ENCODE measurements at regions of chr6 and their contacts with region 1.

Region 1: GRCh38 chr6:21587179-21587924 is 6.2 kb upstream of the SOX4 start:
- DNase-seq: peak; percentile 80
- H3K4me3 ChIP-seq: peak overlapping the region; percentile 78 to 86
- H3K27ac ChIP-seq: peak overlapping the region; percentile 88 to 99
- H3K4me1 ChIP-seq: peaks cover 0 to 6% of the 10 kb centered on the region in 2 experiments; a peak in 2 of 4 replicates
- H3K27me3 ChIP-seq: no peaks in the 10 kb centered on the region
- CTCF ChIP-seq: peak; percentile 41
- EP300 ChIP-seq: 0 out of 4 replicates have a peak, but pooled peaks of 1 of the 2 experiments have one; percentile 21
- RAD21 ChIP-seq: peak; percentile 30

Region 2: GRCh38 chr6:20877008-20877937 is 710.1 kb before region 1 on chr6:
- CTCF ChIA-PET with region 1: interaction called, 41 read pairs
- POLR2A ChIA-PET with region 1: interaction called, 14 read pairs
- DNase-seq: no peak
- H3K4me3 ChIP-seq: no peak overlapping the region
- H3K27ac ChIP-seq: peak overlapping the region; percentile 44 to 88
- H3K4me1 ChIP-seq: peaks cover 20 to 29% of the 10 kb centered on the region in 2 experiments; a peak in 3 of 4 replicates
- H3K27me3 ChIP-seq: no peaks in the 10 kb centered on the region
- CTCF ChIP-seq: no peak
- EP300 ChIP-seq: peak in 1 of 2 experiments; percentile 66; a peak in 1 of 4 replicates
- RAD21 ChIP-seq: no peak

Region 3: DNA sequence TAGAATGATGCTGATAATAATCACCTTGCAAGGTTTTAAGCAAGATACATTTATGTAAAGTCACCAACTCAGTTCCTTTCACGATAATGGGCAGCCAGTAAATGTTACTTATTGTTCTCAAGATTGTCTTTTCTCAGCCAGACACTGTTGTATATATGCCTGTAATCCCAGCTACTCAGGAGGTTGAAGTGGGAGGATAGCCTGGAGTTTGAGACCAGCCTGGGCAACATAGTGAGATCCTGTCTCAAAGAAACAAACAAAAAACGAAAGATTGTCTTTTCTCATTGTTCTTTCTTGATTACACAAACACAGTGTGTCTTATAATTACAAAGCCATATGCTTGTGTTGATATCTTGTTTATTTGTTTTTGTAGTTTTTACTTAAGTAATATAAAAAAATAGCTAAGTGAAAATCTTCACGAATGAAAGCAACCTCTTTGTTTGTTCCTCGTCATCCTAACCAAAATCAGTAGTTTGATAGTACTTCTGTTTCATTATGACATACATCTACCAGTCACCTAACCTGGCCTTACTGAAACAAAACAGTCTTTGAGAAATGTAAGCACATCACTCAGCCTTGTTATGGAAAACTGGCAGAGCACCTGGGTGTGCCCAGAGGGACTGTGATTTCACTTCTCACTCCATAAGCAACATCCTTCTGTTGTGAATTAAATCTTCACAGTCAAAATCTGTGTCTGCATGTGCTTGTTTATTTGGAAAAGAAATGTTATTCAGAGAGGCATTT is 430.0 kb before region 1 on chr6:
- CTCF ChIA-PET with region 1: interaction called, 6 read pairs
- POLR2A ChIA-PET with region 1: interaction called, 13 read pairs
- DNase-seq: peak; percentile 19
- H3K4me3 ChIP-seq: no peak overlapping the region
- H3K27ac ChIP-seq: peak overlapping the region in 1 of 2 experiments; percentile 98; a peak in 3 of 4 replicates
- H3K4me1 ChIP-seq: peaks cover 0 to 25% of the 10 kb centered on the region in 2 experiments; a peak in 2 of 4 replicates
- H3K27me3 ChIP-seq: no peaks in the 10 kb centered on the region
- CTCF ChIP-seq: no peak
- EP300 ChIP-seq: no peak
- RAD21 ChIP-seq: no peak

Region 4: GRCh38 chr6:21240709-21241108 is 346.6 kb before region 1 on chr6:
- CTCF ChIA-PET with region 1: interaction called, 14 read pairs
- POLR2A ChIA-PET with region 1: interaction called, 23 read pairs
- DNase-seq: no peak
- H3K4me3 ChIP-seq: no peak overlapping the region
- H3K27ac ChIP-seq: peak overlapping the region in 1 of 2 experiments; percentile 99; a peak in 2 of 4 replicates
- H3K4me1 ChIP-seq: peaks cover 0 to 20% of the 10 kb centered on the region in 2 experiments; a peak in 2 of 4 replicates
- H3K27me3 ChIP-seq: no peaks in the 10 kb centered on the region
- CTCF ChIP-seq: no peak
- EP300 ChIP-seq: no peak
- RAD21 ChIP-seq: no peak

Region 5: DNA sequence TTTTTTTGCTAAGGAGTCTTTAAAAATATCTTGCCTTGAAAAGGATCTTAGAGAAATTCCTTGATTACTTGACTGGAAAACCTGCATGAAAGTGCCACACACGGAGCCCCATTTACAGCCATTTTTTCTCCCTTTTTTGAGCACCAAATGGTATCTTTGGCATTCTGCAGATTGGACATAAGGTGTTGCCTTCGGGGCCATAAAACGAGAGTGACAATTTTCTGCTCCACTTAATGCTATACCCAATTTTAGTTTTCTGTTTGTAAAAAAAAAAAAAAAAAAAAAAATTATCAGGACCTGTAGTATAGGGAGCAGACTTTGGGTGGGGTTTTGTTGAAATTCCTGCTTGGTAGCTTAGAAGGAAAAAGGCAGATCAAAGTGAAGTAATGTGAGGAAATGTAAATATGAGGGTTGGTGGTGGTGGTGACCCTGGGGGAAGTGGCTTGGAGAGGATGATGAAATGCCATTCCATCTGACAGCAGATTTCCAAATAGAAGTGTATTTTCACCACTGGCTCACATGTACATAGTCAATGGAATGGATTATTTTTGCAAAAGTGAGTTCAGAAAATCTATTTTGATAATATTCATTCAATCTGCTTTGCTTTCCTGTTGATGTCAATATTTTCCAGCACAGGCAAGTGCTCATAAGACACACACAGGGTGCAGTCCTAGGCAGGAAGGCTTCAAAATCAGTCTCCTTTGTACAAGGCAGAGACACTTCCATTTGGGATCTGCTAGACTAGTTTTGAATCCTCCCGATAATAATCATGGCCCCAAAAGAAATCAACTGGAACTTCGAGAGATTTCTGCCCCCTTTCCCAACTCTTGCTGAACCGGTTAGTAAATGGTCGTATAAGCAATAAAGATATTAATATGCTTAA is 205.8 kb before region 1 on chr6:
- CTCF ChIA-PET with region 1: interaction called, 19 read pairs
- POLR2A ChIA-PET with region 1: interaction called, 42 read pairs
- DNase-seq: no peak
- H3K4me3 ChIP-seq: no peak overlapping the region
- H3K27ac ChIP-seq: peak overlapping the region in 1 of 2 experiments; percentile 99; a peak in 2 of 4 replicates
- H3K4me1 ChIP-seq: peaks cover 0 to 28% of the 10 kb centered on the region in 2 experiments; a peak in 2 of 4 replicates
- H3K27me3 ChIP-seq: no peaks in the 10 kb centered on the region
- CTCF ChIP-seq: no peak
- EP300 ChIP-seq: no peak
- RAD21 ChIP-seq: no peak